H1 (cell line): ENCODE measurements at regions of chr13 and their contacts with region 1.

Region 1: GRCh38 chr13:71979616-71980015 is 112.6 kb upstream of the DACH1 start:
- DNase-seq: peak in 1 of 2 experiments; percentile 49
- H3K4me3 ChIP-seq: no peak overlapping the region
- H3K27ac ChIP-seq: no peak overlapping the region
- H3K4me1 ChIP-seq: peaks cover 0 to 5% (median 2%) of the 10 kb centered on the region in 4 experiments; a peak in 2 of 7 replicates
- H3K27me3 ChIP-seq: no peaks in the 10 kb centered on the region
- CTCF ChIP-seq: peak in 2 of 3 experiments; percentile 46 to 52; a peak in 3 of 4 replicates
- EP300 ChIP-seq: no peak
- POLR2A ChIP-seq: no peak
- RAD21 ChIP-seq: peak; percentile 67 to 71

Region 2: DNA sequence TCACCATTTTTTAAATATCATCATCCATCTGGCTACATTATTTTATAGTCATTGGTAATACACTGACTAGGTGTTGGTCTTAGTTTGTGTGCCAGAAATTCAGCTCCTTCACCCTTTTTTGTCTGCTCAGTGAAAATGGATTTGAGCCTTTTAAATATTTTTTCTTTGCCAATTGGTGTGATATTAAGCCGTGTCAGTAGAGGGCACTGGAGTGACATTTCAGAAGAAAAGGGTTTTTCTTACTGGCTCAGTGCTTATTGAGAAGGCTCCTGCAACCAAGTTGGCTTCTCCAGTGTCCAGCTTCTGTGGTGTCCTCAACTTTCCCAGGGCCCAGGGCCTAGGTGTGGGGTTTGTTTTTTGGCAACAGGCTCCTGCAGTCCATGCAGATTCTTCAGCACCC is 659.2 kb before region 1 on chr13:
- CTCF ChIA-PET with region 1: interaction called, 12 read pairs
- POLR2A ChIA-PET with region 1: no interaction called
- DNase-seq: peak in 1 of 2 experiments; percentile 51
- H3K4me3 ChIP-seq: no peak overlapping the region
- H3K27ac ChIP-seq: no peak overlapping the region
- H3K4me1 ChIP-seq: no peaks in the 10 kb centered on the region
- H3K27me3 ChIP-seq: no peaks in the 10 kb centered on the region
- CTCF ChIP-seq: peak in 2 of 3 experiments; percentile 43 to 68; a peak in 3 of 4 replicates
- EP300 ChIP-seq: no peak
- POLR2A ChIP-seq: no peak
- RAD21 ChIP-seq: peak; percentile 79 to 87

Region 3: GRCh38 chr13:71964491-71965100 is 15.0 kb before region 1 on chr13:
- CTCF ChIA-PET with region 1: interaction called, 44 read pairs
- POLR2A ChIA-PET with region 1: no interaction called
- DNase-seq: no peak
- H3K4me3 ChIP-seq: no peak overlapping the region
- H3K27ac ChIP-seq: no peak overlapping the region
- H3K4me1 ChIP-seq: no peaks in the 10 kb centered on the region
- H3K27me3 ChIP-seq: no peaks in the 10 kb centered on the region
- CTCF ChIP-seq: no peak
- EP300 ChIP-seq: no peak
- POLR2A ChIP-seq: no peak
- RAD21 ChIP-seq: no peak

Region 4: DNA sequence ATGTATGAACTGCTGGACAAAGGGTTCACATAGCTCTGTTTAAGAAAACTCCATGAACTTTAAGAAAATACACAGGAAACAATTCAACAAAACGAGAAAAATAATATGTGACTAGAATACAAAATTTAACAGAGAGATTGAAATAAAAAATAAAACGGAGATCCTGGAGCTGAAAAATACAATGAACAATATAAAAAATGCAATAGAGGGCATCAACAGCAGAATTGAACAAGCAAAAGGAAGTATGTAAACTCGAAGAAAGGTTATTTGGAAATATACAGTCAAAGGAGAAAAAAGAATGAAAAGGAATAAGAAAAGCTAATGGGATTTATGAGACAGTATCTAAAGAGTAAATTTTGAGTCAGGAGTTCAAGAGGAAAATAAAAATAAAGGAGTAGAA is 50.4 kb after region 1 on chr13:
- CTCF ChIA-PET with region 1: no interaction called
- POLR2A ChIA-PET with region 1: no interaction called
- DNase-seq: no peak
- H3K4me3 ChIP-seq: no peak overlapping the region
- H3K27ac ChIP-seq: no peak overlapping the region
- H3K4me1 ChIP-seq: no peaks in the 10 kb centered on the region
- H3K27me3 ChIP-seq: no peaks in the 10 kb centered on the region
- CTCF ChIP-seq: no peak
- EP300 ChIP-seq: no peak
- POLR2A ChIP-seq: no peak
- RAD21 ChIP-seq: no peak